Activated naive CD8-positive, alpha-beta T cell treated with anti-CD3 and anti-CD28 coated beads, Interleukin-2, amount 10 ng/mL, durations not matched to agents 7 days and 5 days (primary cell): ENCODE measurements at regions of chr11 and their contacts with region 1.

Region 1: GRCh38 chr11:67265633-67266423 is 445 bp upstream of the GRK2 start:
- DNase-seq: peak; percentile 91
- ATAC-seq: peak; percentile 35
- H3K4me3 Mint-ChIP-seq: peak overlapping the region; percentile 61
- H3K27ac Mint-ChIP-seq: peak overlapping the region; percentile 70
- H3K4me1 Mint-ChIP-seq: peaks cover 56% of the 10 kb centered on the region
- H3K27me3 Mint-ChIP-seq: no peaks in the 10 kb centered on the region

Region 2: GRCh38 chr11:67022328-67022927 is 243.4 kb before region 1 on chr11:
- POLR2A ChIA-PET with region 1: no interaction called
- DNase-seq: no peak
- ATAC-seq: no peak
- H3K4me3 Mint-ChIP-seq: no peak overlapping the region
- H3K27ac Mint-ChIP-seq: no peak overlapping the region
- H3K4me1 Mint-ChIP-seq: peaks cover 13% of the 10 kb centered on the region
- H3K27me3 Mint-ChIP-seq: peaks cover 66% of the 10 kb centered on the region

Region 3: DNA sequence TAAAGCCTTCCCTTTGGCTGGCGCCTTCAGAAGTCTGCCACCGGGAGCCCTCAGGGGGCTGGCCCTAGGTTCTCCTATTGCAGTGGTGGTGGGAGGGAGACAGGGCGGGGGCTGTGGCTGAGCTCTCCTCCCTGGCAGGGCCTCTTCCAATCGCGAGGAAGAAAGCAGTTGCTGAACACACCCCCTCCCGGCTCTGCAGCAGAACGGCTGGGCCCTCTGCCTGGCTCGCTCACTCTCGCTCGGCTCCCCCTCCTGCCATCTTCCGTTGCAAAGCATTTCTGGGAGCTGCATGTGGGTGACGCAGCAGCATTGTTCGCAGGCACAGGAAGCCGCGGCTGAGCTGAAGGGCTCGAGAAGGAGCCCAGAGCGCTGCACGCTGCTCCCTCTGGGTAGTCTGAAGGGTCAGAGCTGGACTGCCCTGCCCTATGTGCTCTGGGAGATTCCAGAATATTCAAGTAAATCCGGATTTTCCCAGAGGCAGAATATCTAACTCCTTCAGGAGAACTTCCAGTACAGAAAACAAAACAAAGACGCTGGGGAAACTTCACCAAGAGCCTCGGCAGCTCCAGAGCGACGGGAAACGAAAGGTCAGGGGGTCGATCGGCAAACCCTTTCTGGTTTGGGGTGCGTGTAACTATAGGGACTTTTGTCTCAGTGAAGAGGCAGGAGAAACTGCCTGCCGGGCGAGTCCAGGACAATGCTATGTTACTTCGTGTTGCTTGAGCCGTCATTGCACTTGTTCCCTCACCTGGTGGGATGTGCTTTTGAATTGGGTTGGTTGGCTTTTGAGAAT is 25.8 kb before region 1 on chr11:
- POLR2A ChIA-PET with region 1: interaction called, 25 read pairs
- DNase-seq: peak; percentile 87
- ATAC-seq: peak; percentile 96
- H3K4me3 Mint-ChIP-seq: peak overlapping the region; percentile 92
- H3K27ac Mint-ChIP-seq: peak overlapping the region; percentile 94
- H3K4me1 Mint-ChIP-seq: peaks cover 38% of the 10 kb centered on the region
- H3K27me3 Mint-ChIP-seq: no peaks in the 10 kb centered on the region

Region 4: GRCh38 chr11:67277231-67277961 is 11.6 kb after region 1 on chr11:
- POLR2A ChIA-PET with region 1: interaction called, 64 read pairs
- DNase-seq: peak; percentile 90
- ATAC-seq: peak; percentile 87
- H3K4me3 Mint-ChIP-seq: peak overlapping the region; percentile 82
- H3K27ac Mint-ChIP-seq: peak overlapping the region; percentile 97
- H3K4me1 Mint-ChIP-seq: peaks cover 45% of the 10 kb centered on the region
- H3K27me3 Mint-ChIP-seq: no peaks in the 10 kb centered on the region

Region 5: DNA sequence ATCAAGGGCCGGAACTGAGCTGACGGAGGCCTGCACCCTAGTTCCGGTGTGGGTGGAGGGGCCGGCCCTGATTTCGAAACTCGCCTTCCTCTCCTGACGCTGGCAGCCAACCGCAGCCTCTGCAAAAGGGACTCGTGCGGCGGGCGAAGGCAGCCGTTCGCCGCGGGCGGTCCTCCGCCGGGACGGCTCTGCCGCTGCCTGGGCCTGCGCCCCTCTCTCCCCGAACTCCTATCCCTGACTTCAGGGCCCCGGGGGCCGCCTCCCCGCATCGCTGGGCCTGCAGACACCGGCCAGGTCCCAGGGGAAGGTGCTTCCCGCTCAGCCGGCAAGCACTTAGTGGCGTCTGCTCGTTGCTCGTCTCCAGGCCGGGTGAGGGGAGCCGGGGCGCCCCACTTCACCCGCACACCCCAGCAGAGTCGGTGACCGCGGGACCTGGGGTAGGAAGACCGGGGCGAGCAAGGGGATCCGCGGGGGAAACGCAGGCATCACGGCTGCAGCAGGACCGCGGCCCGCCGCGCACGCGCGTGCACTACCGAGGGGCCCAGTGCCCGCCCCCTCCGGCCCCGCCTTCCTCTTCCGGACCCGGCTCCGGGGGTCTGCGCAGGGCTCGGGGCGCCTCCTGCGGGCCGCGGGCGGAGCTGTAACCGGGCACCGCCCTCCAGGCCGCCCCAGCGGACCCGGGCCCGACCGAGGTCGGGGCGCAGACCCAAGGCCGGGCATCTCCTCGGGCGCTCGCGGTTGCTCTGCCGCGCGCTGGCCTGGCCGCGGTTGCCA is 22.8 kb after region 1 on chr11:
- POLR2A ChIA-PET with region 1: interaction called, 190 read pairs
- DNase-seq: peak; percentile 96
- ATAC-seq: peak; percentile 68
- H3K4me3 Mint-ChIP-seq: peak overlapping the region; percentile 79
- H3K27ac Mint-ChIP-seq: peak overlapping the region; percentile 96
- H3K4me1 Mint-ChIP-seq: peaks cover 40% of the 10 kb centered on the region
- H3K27me3 Mint-ChIP-seq: no peaks in the 10 kb centered on the region

Region 6: GRCh38 chr11:67317205-67317887 is 51.5 kb after region 1 on chr11:
- POLR2A ChIA-PET with region 1: interaction called, 35 read pairs
- DNase-seq: peak; percentile 99
- ATAC-seq: peak; percentile 77
- H3K4me3 Mint-ChIP-seq: peak overlapping the region; percentile 98
- H3K27ac Mint-ChIP-seq: peak overlapping the region; percentile 99
- H3K4me1 Mint-ChIP-seq: peaks cover 32% of the 10 kb centered on the region
- H3K27me3 Mint-ChIP-seq: peaks cover 9% of the 10 kb centered on the region